Heart right ventricle (tissue), 16 donors: ENCODE measurements at regions of chr1 and their contacts with region 1.

Region 1: GRCh38 chr1:47934243-47934805 is 62.9 kb downstream of the TRABD2B start:
- DNase-seq: peak; percentile 57 to 58
- ATAC-seq: peak; percentile 33 to 77 (median 55)
- H3K4me3 ChIP-seq: no peak overlapping the region
- H3K27ac ChIP-seq: peak overlapping the region in 3 of 10 donors; percentile 15 to 63 (median 19)
- H3K4me1 ChIP-seq: peaks cover 0 to 36% (median 11%) of the 10 kb centered on the region in 9 donors
- H3K27me3 ChIP-seq: peaks cover 0 to 3% (median 0%) of the 10 kb centered on the region in 7 donors
- CTCF ChIP-seq: no peak

Region 2: GRCh38 chr1:47837866-47838561 is 96.3 kb before region 1 on chr1:
- intact Hi-C with region 1: loop called in 1 of 10 experiments (anchors 10 kb)
- DNase-seq: no peak
- ATAC-seq: peak in 1 of 8 donors; percentile 9
- H3K4me3 ChIP-seq: no peak overlapping the region
- H3K27ac ChIP-seq: peak overlapping the region in 3 of 10 donors; percentile 43 to 59 (median 52)
- H3K4me1 ChIP-seq: peaks cover 0 to 16% (median 0%) of the 10 kb centered on the region in 9 donors
- H3K27me3 ChIP-seq: no peaks in the 10 kb centered on the region
- CTCF ChIP-seq: no peak

Region 3: GRCh38 chr1:47906009-47906432 is 28.3 kb before region 1 on chr1:
- intact Hi-C with region 1: no loop called
- DNase-seq: no peak
- ATAC-seq: peak in 3 of 8 donors; percentile 43 to 56 (median 51)
- H3K4me3 ChIP-seq: no peak overlapping the region
- H3K27ac ChIP-seq: no peak overlapping the region
- H3K4me1 ChIP-seq: no peaks in the 10 kb centered on the region
- H3K27me3 ChIP-seq: peaks cover 0 to 8% (median 0%) of the 10 kb centered on the region in 7 donors
- CTCF ChIP-seq: no peak